Activated CD8-positive, alpha-beta T cell treated with anti-CD3 and anti-CD28 coated beads for 36 hours (primary cell): ENCODE measurements at regions of chr13 and their contacts with region 1.

Region 1: GRCh38 chr13:98484289-98485219 is 92.4 kb downstream of the STK24 start:
- DNase-seq: peak; percentile 84
- ATAC-seq: peak; percentile 70
- H3K4me3 Mint-ChIP-seq: no peak overlapping the region
- H3K27ac Mint-ChIP-seq: peak overlapping the region; percentile 75
- H3K4me1 Mint-ChIP-seq: peaks cover 86% of the 10 kb centered on the region
- H3K27me3 Mint-ChIP-seq: no peaks in the 10 kb centered on the region
- CTCF ChIP-seq: no peak

Region 2: GRCh38 chr13:98411681-98412201 is 72.8 kb before region 1 on chr13:
- CTCF ChIA-PET with region 1: no interaction called
- POLR2A ChIA-PET with region 1: no interaction called
- intact Hi-C with region 1: no loop called
- DNase-seq: no peak
- ATAC-seq: no peak
- H3K4me3 Mint-ChIP-seq: peak overlapping the region; percentile 45
- H3K27ac Mint-ChIP-seq: peak overlapping the region; percentile 2
- H3K4me1 Mint-ChIP-seq: peaks cover 9% of the 10 kb centered on the region
- H3K27me3 Mint-ChIP-seq: peaks cover 3% of the 10 kb centered on the region
- CTCF ChIP-seq: no peak

Region 3: GRCh38 chr13:98436233-98436910 is 48.2 kb before region 1 on chr13:
- CTCF ChIA-PET with region 1: no interaction called
- POLR2A ChIA-PET with region 1: no interaction called
- intact Hi-C with region 1: no loop called
- DNase-seq: no peak
- ATAC-seq: no peak
- H3K4me3 Mint-ChIP-seq: no peak overlapping the region
- H3K27ac Mint-ChIP-seq: no peak overlapping the region
- H3K4me1 Mint-ChIP-seq: no peaks in the 10 kb centered on the region
- H3K27me3 Mint-ChIP-seq: peaks cover 4% of the 10 kb centered on the region
- CTCF ChIP-seq: no peak

Region 4: DNA sequence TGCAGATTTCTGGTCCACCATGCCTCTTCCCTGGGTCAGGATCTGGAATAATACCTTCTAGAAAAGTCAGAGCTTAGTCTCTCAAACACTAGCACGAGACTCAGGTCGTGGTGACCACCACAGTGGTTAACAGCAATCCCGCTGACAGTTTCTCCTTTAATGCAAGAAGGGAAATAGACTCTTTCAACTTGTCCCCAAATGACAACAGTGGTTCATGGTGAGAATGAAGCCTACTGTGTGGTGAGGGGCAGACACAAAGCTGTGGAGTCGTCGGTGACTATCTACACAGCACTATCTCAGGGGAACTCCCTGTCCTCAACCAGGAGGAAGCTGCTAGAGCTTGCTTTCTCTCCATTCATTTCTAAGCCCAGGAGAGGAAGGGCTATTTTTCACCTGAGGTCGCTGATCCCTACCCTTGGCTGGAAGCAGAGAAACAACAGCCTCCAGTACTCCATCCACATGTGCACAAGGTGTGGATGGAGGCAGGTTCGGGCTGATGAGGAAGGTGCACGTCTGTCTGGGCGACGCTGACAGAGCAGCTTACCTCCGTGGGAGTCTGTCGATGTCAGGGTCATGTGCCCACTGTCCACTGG is 19.9 kb after region 1 on chr13:
- CTCF ChIA-PET with region 1: interaction called, 11 read pairs
- POLR2A ChIA-PET with region 1: interaction called, 14 read pairs
- intact Hi-C with region 1: no loop called
- DNase-seq: peak; percentile 77
- ATAC-seq: peak; percentile 98
- H3K4me3 Mint-ChIP-seq: no peak overlapping the region
- H3K27ac Mint-ChIP-seq: no peak overlapping the region
- H3K4me1 Mint-ChIP-seq: peaks cover 77% of the 10 kb centered on the region
- H3K27me3 Mint-ChIP-seq: no peaks in the 10 kb centered on the region
- CTCF ChIP-seq: no peak

Region 5: DNA sequence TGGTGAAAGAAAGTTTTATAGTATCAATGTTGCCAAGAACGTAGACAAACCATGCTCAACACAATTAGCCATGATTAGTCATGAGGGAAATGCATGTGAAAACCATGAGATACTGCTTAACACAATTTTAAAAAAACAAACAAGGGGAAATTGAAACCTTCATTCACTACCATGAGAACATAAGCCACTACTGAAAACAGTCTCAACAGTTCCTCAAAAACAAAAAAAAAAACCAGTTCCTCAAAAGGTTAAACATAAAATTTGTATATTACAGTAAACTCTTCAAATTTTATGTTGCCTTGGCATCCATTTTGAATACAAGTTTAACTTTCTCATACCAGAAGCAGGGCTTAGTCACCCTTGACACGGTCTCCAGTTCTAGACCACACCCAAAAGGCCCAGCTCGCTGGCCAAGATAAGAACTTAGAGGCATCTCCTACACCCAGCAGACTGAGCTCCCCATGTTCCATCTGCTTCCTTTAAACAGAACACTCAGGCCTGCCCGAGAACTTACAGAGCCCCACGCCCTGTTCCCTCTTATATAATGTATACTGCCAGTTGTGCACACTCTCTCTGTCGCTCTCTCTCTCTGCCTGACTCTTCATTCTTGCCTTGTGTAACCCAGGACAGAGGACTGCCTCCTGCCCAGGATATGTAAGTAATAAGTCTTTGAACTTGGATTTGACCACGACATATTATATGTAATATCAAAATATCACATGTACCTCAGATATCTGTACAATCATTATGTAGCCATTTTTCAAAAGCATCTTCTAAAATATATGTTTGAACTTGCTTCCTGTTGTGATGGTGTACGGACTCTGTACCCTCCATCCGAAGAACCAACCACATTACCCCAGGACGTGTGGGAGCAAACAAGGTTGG is 25.0 kb after region 1 on chr13:
- CTCF ChIA-PET with region 1: interaction called, 11 read pairs
- POLR2A ChIA-PET with region 1: interaction called, 14 read pairs
- intact Hi-C with region 1: loop called (anchors 5 kb)
- DNase-seq: peak; percentile 72
- ATAC-seq: peak; percentile 81
- H3K4me3 Mint-ChIP-seq: no peak overlapping the region
- H3K27ac Mint-ChIP-seq: peak overlapping the region; percentile 87
- H3K4me1 Mint-ChIP-seq: peaks cover 90% of the 10 kb centered on the region
- H3K27me3 Mint-ChIP-seq: no peaks in the 10 kb centered on the region
- CTCF ChIP-seq: no peak

Region 6: GRCh38 chr13:98528663-98529570 is 44.4 kb after region 1 on chr13:
- CTCF ChIA-PET with region 1: interaction called, 11 read pairs
- POLR2A ChIA-PET with region 1: no interaction called
- intact Hi-C with region 1: no loop called
- DNase-seq: peak; percentile 30
- ATAC-seq: peak; percentile 80
- H3K4me3 Mint-ChIP-seq: peak overlapping the region; percentile 31
- H3K27ac Mint-ChIP-seq: peak overlapping the region; percentile 84
- H3K4me1 Mint-ChIP-seq: peaks cover 86% of the 10 kb centered on the region
- H3K27me3 Mint-ChIP-seq: no peaks in the 10 kb centered on the region
- CTCF ChIP-seq: no peak